ENCODE measurements at regions of chr22 and their contacts with region 1.

Region 1: DNA sequence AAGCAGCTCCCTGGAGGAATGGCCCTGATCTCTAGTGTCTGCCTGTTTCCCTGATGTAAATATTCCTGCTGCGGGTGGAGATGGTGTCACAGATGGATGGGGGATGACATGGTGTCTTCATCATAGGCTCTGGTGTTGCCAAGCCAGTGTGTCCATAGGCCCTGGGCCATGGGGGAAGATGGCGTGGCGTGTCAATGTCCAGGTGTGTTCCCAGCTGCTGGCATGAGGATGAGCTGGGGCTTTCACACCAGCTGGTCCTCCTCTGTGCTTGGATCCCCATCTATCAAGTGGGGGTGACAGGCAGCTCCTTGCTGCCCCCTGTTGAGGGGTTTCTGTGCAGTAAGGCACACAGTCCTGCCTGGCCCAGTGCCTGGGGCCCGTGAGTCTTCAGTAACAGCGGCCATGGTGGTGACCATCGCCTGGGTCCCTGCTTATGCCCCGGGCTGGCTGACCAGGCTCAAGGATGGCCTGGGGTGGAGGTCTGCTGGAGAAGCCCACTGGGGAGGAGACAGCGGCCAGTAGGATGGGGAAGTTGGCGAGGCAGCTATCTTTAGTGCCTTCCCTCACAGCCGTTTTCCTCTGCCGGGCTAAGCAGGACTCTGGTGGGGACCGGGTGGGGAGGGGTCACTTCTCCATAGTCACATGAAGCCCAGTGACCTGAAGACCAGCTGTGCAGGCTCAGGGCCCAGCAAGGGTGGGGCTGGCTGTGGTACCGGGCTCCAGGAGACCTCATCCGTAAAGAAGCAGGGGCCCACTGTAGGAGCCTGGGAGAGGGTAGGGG is 12.7 kb downstream of the RPL3 start:
- DNase-seq: peak; percentile 78
- H3K4me3 Mint-ChIP-seq: no peak overlapping the region
- H3K27ac Mint-ChIP-seq: no peak overlapping the region
- H3K4me1 Mint-ChIP-seq: no peaks in the 10 kb centered on the region
- H3K27me3 Mint-ChIP-seq: no peaks in the 10 kb centered on the region

Region 2: GRCh38 chr22:39220897-39221850 is 85.6 kb before region 1 on chr22:
- CTCF ChIA-PET with region 1: no interaction called
- intact Hi-C with region 1: loop called (anchors 5 kb)
- DNase-seq: no peak
- H3K4me3 Mint-ChIP-seq: no peak overlapping the region
- H3K27ac Mint-ChIP-seq: no peak overlapping the region
- H3K4me1 Mint-ChIP-seq: peaks cover 4% of the 10 kb centered on the region
- H3K27me3 Mint-ChIP-seq: no peaks in the 10 kb centered on the region

Region 3: DNA sequence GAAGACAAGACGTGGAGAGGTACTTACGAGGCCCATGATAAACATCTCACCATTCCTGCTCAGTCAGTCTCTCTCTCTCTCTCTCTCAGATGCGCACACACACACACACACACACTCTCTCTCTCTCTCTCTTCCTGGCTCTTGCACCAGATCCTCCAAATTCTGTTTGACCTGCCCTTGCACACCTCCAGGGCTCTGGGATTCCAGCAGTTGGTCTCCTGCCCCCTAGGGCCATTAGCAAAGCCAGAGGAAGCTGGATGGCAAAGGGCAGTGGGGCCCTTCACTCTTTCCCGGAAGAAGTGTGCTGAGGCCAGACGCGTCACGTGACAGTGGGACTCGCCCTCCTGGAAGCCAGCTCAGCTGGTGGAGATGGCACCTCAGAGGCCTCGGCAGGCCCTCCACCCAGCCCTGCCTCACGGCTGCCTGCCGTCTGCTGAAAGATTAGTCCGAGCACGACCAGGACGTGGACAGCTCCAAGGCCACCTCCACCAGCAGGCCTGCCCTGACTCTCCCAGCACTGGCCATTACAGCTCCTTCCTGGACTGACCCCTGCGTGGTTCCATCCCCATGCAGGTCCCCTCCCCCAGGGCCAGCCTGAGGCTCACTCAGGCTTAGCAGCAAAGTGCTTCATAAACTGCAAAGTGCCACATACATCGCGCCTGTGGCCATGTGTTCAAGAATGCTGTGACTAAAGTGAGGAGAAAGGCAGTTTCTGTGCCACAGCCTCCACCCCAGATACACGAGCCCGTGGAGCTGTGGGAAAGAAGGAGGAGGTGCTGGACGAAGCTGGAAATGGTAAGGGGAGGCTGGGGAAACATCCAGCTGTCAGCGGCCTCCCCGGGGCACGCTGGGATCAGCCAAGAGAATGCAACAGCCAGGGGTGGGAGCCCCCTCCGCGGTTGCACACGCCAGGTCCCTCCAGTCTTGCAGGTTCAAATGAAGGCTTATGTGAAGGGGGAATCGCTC is 65.7 kb before region 1 on chr22:
- CTCF ChIA-PET with region 1: no interaction called
- intact Hi-C with region 1: loop called (anchors 2 kb)
- DNase-seq: peak; percentile 75
- H3K4me3 Mint-ChIP-seq: peak overlapping the region; percentile 79
- H3K27ac Mint-ChIP-seq: peak overlapping the region; percentile 88
- H3K4me1 Mint-ChIP-seq: peaks cover 54% of the 10 kb centered on the region
- H3K27me3 Mint-ChIP-seq: peaks cover 25% of the 10 kb centered on the region

Region 4: GRCh38 chr22:39374191-39374590 is 67.4 kb after region 1 on chr22:
- CTCF ChIA-PET with region 1: no interaction called
- intact Hi-C with region 1: no loop called
- DNase-seq: no peak
- H3K4me3 Mint-ChIP-seq: no peak overlapping the region
- H3K27ac Mint-ChIP-seq: no peak overlapping the region
- H3K4me1 Mint-ChIP-seq: no peaks in the 10 kb centered on the region
- H3K27me3 Mint-ChIP-seq: no peaks in the 10 kb centered on the region